ENCODE measurements at regions of chr4 and their contacts with region 1.

Region 1: GRCh38 chr4:152500800-152501434 is 35.0 kb downstream of the FBXW7 start:
- DNase-seq: peak; percentile 84
- ATAC-seq: peak; percentile 85
- H3K4me3 Mint-ChIP-seq: no peak overlapping the region
- H3K27ac Mint-ChIP-seq: no peak overlapping the region
- H3K4me1 Mint-ChIP-seq: peaks cover 14% of the 10 kb centered on the region
- H3K27me3 Mint-ChIP-seq: no peaks in the 10 kb centered on the region

Region 2: GRCh38 chr4:152408514-152409327 is 92.2 kb before region 1 on chr4:
- CTCF ChIA-PET with region 1: interaction called, 15 read pairs
- POLR2A ChIA-PET with region 1: no interaction called
- DNase-seq: peak; percentile 36
- ATAC-seq: no peak
- H3K4me3 Mint-ChIP-seq: no peak overlapping the region
- H3K27ac Mint-ChIP-seq: no peak overlapping the region
- H3K4me1 Mint-ChIP-seq: no peaks in the 10 kb centered on the region
- H3K27me3 Mint-ChIP-seq: no peaks in the 10 kb centered on the region

Region 3: GRCh38 chr4:152434011-152434410 is 66.9 kb before region 1 on chr4:
- CTCF ChIA-PET with region 1: no interaction called
- POLR2A ChIA-PET with region 1: no interaction called
- DNase-seq: no peak
- ATAC-seq: no peak
- H3K4me3 Mint-ChIP-seq: no peak overlapping the region
- H3K27ac Mint-ChIP-seq: no peak overlapping the region
- H3K4me1 Mint-ChIP-seq: peaks cover 7% of the 10 kb centered on the region
- H3K27me3 Mint-ChIP-seq: no peaks in the 10 kb centered on the region

Region 4: DNA sequence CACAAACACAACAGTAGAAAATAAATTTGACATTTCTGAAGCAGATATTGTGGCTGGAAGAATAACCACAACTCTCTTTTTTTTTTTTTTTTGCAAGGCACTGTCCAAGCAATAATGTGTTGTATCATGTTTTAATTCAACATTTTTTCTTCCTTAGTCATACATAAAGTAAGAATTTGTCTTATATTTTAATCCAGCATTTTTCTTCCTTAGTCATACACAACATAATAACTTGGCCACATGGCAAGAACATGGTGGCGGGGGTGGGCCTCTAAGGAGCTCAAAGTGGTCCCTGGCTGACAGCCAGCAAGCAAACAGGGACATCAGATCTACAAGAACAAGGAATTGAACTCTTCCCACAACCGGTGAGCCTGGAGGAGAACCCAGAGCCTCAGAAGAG is 14.8 kb after region 1 on chr4:
- CTCF ChIA-PET with region 1: interaction called, 36 read pairs
- POLR2A ChIA-PET with region 1: no interaction called
- DNase-seq: no peak
- ATAC-seq: no peak
- H3K4me3 Mint-ChIP-seq: no peak overlapping the region
- H3K27ac Mint-ChIP-seq: no peak overlapping the region
- H3K4me1 Mint-ChIP-seq: peaks cover 35% of the 10 kb centered on the region
- H3K27me3 Mint-ChIP-seq: no peaks in the 10 kb centered on the region

Region 5: DNA sequence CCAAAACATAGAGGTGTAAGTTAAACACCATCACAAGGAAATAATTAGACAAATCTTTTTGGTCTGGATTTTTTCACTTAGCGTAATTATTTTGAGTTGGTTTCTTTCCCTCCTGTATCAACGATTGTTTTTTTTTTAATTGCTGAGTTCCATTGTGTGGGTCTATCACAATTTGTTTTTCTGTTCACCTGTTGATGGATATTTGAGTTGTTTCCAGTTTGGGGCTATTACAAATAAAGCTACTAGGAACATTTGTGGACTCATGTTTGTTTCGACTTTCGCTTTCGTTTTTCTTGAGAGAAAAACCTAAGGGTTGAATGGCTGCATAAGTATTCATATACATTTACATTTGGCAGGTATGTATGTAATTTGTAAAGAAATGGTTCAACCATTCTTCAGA is 55.4 kb after region 1 on chr4:
- CTCF ChIA-PET with region 1: interaction called, 19 read pairs
- POLR2A ChIA-PET with region 1: no interaction called
- DNase-seq: no peak
- ATAC-seq: peak; percentile 17
- H3K4me3 Mint-ChIP-seq: peak overlapping the region; percentile 63
- H3K27ac Mint-ChIP-seq: peak overlapping the region; percentile 87
- H3K4me1 Mint-ChIP-seq: peaks cover 50% of the 10 kb centered on the region
- H3K27me3 Mint-ChIP-seq: peaks cover 2% of the 10 kb centered on the region

Region 6: DNA sequence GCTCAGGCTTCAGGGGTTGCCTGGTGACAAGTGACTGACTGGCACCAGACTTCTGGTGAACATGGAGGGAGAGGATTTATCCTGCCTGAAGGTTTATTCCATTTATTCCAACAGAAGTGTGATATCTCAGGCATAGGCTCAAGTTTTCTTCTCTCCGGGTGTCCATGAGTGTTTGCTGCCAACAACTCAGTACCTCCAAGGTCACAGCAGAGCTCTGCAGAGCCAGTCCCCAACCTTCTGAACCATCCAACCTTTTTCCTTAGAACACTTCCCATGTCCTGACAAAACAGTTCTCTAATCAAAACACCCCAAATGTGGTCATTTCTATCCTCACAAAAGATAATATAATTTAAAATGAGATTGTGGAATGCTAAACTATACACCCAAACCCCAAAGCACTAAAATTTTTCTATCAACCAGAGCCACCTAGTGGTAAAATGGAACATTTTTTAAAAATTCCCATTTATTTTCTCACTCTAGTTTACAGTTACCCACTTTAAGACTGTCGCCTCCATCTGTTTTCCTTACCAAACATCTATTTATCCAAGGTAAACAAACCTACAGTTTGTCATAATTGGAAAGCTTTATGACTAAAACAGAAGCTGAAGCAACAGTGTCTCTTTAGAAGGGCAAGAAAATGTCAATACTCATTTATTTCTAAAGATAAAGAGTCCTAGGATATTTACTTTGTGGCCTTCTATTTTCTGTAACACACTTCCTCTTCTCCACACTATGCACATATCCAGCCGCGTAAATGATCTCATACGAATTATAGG is 139.3 kb after region 1 on chr4:
- CTCF ChIA-PET with region 1: interaction called, 152 read pairs
- POLR2A ChIA-PET with region 1: no interaction called
- DNase-seq: no peak
- ATAC-seq: no peak
- H3K4me3 Mint-ChIP-seq: no peak overlapping the region
- H3K27ac Mint-ChIP-seq: no peak overlapping the region
- H3K4me1 Mint-ChIP-seq: peaks cover 16% of the 10 kb centered on the region
- H3K27me3 Mint-ChIP-seq: no peaks in the 10 kb centered on the region

Region 7: GRCh38 chr4:152779513-152780266 is 278.8 kb after region 1 on chr4 and contains the starts of genes ARFIP1 and TIGD4:
- CTCF ChIA-PET with region 1: interaction called, 12 read pairs
- POLR2A ChIA-PET with region 1: interaction called, 3 read pairs
- DNase-seq: peak; percentile 97
- ATAC-seq: peak; percentile 90
- H3K4me3 Mint-ChIP-seq: peak within 1 kb of the TSS; percentile 92
- H3K27ac Mint-ChIP-seq: peak within 1 kb of the TSS; percentile 90
- H3K4me1 Mint-ChIP-seq: peaks cover 40% of the 10 kb centered on the region
- H3K27me3 Mint-ChIP-seq: peaks cover 12% of the 10 kb centered on the region
- total RNA-seq, gene ARFIP1: 20.3 to 20.5 TPM
- total RNA-seq, gene TIGD4: 0.40 to 0.44 TPM